ENCODE measurements at regions of chr18 and their contacts with region 1.

Region 1: GRCh38 chr18:864872-865273 is 39.8 kb upstream of the ADCYAP1 start:
- DNase-seq: peak; percentile 60
- ATAC-seq: peak; percentile 97
- H3K4me3 ChIP-seq: no peak overlapping the region
- H3K27ac ChIP-seq: no peak overlapping the region
- H3K4me1 ChIP-seq: no peaks in the 10 kb centered on the region
- H3K27me3 ChIP-seq: peaks cover 0 to 16% of the 10 kb centered on the region in 2 experiments; a peak in 3 of 5 replicates
- CTCF ChIP-seq: peak; percentile 96
- EP300 ChIP-seq: no peak
- POLR2A ChIP-seq: no peak
- RAD21 ChIP-seq: peak; percentile 97

Region 2: DNA sequence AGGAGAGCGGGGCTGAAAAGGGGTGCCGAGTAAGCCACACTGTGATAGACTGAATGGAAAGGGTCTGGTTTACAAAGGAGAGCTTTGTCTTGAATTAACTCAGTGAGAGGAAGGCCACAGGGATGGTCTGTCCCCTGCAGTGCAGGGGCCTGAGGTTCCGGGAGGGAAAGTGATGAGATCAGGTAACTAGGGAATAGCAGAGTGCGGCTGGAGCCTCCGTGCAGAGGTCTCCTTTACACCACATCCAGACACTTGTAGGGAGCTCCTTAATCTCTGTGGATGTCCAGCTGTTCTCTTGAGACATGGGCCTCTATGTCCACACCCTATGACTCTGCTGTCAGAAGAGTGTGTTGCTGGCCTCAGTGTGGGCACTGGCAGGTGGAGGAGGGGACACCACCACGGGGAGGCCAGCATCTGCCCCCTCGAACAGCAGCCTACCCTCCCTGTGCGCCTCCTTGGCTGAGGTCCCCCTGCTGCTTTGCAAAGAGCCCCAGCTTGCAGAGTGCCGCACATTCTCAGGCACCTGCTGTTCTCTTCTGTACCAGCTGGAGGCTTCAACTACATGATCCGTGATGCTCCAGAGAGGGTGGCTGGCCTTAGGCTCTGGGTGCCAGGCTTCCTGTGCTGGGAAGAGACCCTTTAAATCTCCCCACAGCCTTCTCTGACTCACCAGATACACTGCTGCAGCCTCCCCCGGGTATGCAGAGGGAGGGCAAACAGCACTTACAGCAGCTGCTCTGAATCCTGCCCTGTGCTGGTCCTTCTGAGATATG is 178.3 kb before region 1 on chr18:
- CTCF ChIA-PET with region 1: no interaction called
- POLR2A ChIA-PET with region 1: no interaction called
- in situ Hi-C with region 1: no loop called
- intact Hi-C with region 1: no loop called
- DNase-seq: no peak
- ATAC-seq: peak; percentile 18; the same call in 1 of the 3 replicates
- H3K4me3 ChIP-seq: no peak overlapping the region
- H3K27ac ChIP-seq: no peak overlapping the region
- H3K4me1 ChIP-seq: peaks cover 31% of the 10 kb centered on the region
- H3K27me3 ChIP-seq: no peaks in the 10 kb centered on the region
- CTCF ChIP-seq: no peak
- EP300 ChIP-seq: no peak
- POLR2A ChIP-seq: no peak
- RAD21 ChIP-seq: no peak

Region 3: DNA sequence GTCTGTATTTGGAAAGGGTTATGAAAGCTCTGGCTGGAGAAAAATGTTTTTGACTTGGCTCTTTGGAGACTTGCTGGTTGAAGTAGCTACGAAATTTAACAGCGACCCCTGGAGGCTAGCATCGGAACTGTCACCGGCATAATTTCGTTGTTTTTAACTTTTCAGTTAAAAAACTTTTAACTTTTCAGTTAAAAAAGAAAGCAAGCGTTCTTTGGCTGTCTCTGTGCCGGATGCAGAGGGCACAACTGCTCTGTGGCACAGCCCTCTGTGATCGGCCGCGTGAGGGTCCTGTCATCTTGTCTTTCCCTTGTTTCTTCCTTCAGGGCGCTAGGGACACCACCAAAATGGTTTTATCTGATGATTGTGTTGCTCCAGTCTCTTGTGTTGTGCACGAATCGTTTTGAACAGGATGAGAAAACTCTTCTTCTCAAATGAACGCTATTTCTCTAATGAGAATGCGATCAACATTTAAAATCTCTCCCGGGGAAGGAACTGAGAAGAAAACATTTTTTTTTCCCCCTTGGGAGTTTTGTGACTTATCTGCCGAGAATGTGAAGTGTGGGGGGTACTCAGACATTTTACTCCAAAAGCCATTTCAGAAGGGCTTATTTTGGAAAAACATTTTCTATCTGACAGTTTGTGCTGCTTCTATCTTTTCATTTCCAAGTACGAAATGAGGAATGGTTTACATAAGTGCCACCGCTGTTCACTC is 96.9 kb after region 1 on chr18:
- CTCF ChIA-PET with region 1: interaction called, 22 read pairs
- POLR2A ChIA-PET with region 1: no interaction called
- in situ Hi-C with region 1: loop called (anchors 5 kb)
- intact Hi-C with region 1: loop called (anchors 1 kb)
- DNase-seq: peak; percentile 13
- ATAC-seq: no peak
- H3K4me3 ChIP-seq: no peak overlapping the region
- H3K27ac ChIP-seq: no peak overlapping the region
- H3K4me1 ChIP-seq: no peaks in the 10 kb centered on the region
- H3K27me3 ChIP-seq: peaks cover 0 to 3% of the 10 kb centered on the region in 2 experiments; a peak in 1 of 5 replicates
- CTCF ChIP-seq: peak; percentile 67
- EP300 ChIP-seq: no peak
- POLR2A ChIP-seq: no peak
- RAD21 ChIP-seq: no peak

Region 4: GRCh38 chr18:1513519-1513918 is 648.6 kb after region 1 on chr18:
- CTCF ChIA-PET with region 1: no interaction called
- POLR2A ChIA-PET with region 1: no interaction called
- in situ Hi-C with region 1: no loop called
- intact Hi-C with region 1: loop called (anchors 10 kb)
- DNase-seq: peak; percentile 3
- ATAC-seq: no peak
- H3K4me3 ChIP-seq: no peak overlapping the region
- H3K27ac ChIP-seq: no peak overlapping the region
- H3K4me1 ChIP-seq: no peaks in the 10 kb centered on the region
- H3K27me3 ChIP-seq: no peaks in the 10 kb centered on the region; a peak in 1 of 5 replicates
- CTCF ChIP-seq: no peak
- EP300 ChIP-seq: no peak
- POLR2A ChIP-seq: no peak
- RAD21 ChIP-seq: no peak

Region 5: GRCh38 chr18:1663879-1664705 is 799.2 kb after region 1 on chr18:
- CTCF ChIA-PET with region 1: interaction called, 5 read pairs
- POLR2A ChIA-PET with region 1: no interaction called
- in situ Hi-C with region 1: loop called (anchors 25 kb)
- intact Hi-C with region 1: no loop called
- DNase-seq: peak; percentile 44
- ATAC-seq: peak; percentile 92
- H3K4me3 ChIP-seq: no peak overlapping the region
- H3K27ac ChIP-seq: no peak overlapping the region
- H3K4me1 ChIP-seq: no peaks in the 10 kb centered on the region
- H3K27me3 ChIP-seq: no peaks in the 10 kb centered on the region
- CTCF ChIP-seq: peak; percentile 69
- EP300 ChIP-seq: no peak
- POLR2A ChIP-seq: no peak
- RAD21 ChIP-seq: no peak

Region 6: GRCh38 chr18:2571200-2572143 is 1706.6 kb after region 1 on chr18 and contains the starts of genes METTL4 and NDC80:
- CTCF ChIA-PET with region 1: no interaction called
- POLR2A ChIA-PET with region 1: no interaction called
- in situ Hi-C with region 1: loop called (anchors 25 kb)
- intact Hi-C with region 1: no loop called
- DNase-seq: peak; percentile 85
- ATAC-seq: peak; percentile 91
- H3K4me3 ChIP-seq: peak within 1 kb of the TSS; percentile 82 to 89 (median 83)
- H3K27ac ChIP-seq: peak within 1 kb of the TSS; percentile 99
- H3K4me1 ChIP-seq: peaks cover 23% of the 10 kb centered on the region
- H3K27me3 ChIP-seq: no peaks in the 10 kb centered on the region; a peak in 1 of 5 replicates
- CTCF ChIP-seq: peak; percentile 38; the same call in 1 of the 2 replicates
- EP300 ChIP-seq: no peak
- POLR2A ChIP-seq: peak; percentile 65 to 71; a peak in 3 of 4 replicates
- RAD21 ChIP-seq: no peak
- total RNA-seq, gene METTL4: 6.8 and 8.4 TPM in 2 replicates
- total RNA-seq, gene NDC80: 33.0 and 47.0 TPM in 2 replicates